ENCODE measurements at regions of chr3 and their contacts with region 1.

Region 1: DNA sequence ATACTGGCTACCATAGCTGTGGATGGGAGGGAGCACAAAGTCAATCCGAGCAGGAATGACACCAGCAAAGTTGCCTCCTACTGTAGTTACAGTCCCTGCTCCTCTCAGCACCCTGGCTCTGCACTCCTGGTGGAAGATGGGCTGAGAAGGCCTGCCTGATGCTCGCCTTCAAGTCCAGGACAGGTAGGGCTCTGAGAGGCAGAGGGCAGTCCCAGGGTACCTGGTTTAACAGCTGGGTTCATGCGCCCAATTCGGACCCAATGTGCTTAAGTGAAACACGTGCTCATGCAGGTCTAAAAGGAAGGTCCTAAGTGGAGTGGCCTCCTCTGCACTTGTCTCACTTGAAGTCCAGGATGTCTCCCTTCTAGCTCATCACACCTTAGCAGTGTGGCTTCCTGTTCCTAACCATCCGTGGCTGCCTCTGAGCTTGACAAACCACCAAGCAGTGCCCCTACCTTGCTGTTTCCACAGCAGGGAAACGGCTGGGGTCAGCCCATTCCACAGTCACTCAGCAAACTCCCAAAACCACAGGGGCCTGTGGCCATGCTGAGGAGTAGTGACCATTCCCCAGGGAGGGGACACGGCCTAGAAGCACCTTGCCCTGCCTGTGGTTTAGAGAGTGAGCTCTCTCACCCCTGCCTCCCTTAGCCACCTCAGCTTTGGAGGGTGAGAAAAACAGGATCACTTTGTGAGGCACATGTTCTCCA is 3.9 kb upstream of the MUSTN1 start:
- DNase-seq: peak; percentile 59
- H3K4me3 Mint-ChIP-seq: no peak overlapping the region
- H3K27ac Mint-ChIP-seq: peak overlapping the region; percentile 26
- H3K4me1 Mint-ChIP-seq: peaks cover 35% of the 10 kb centered on the region
- H3K27me3 Mint-ChIP-seq: no peaks in the 10 kb centered on the region

Region 2: GRCh38 chr3:52820736-52821135 is 18.0 kb before region 1 on chr3:
- CTCF ChIA-PET with region 1: interaction called, 13 read pairs
- POLR2A ChIA-PET with region 1: interaction called, 10 read pairs
- DNase-seq: peak; percentile 29
- H3K4me3 Mint-ChIP-seq: no peak overlapping the region
- H3K27ac Mint-ChIP-seq: no peak overlapping the region
- H3K4me1 Mint-ChIP-seq: no peaks in the 10 kb centered on the region
- H3K27me3 Mint-ChIP-seq: no peaks in the 10 kb centered on the region